ENCODE measurements at regions of chr2 and their contacts with region 1.

Region 1: GRCh38 chr2:73985308-73986084 is 786 bp downstream of the TET3 start:
- DNase-seq: peak; percentile 59
- H3K4me3 ChIP-seq: peak overlapping the region; percentile 52
- H3K27ac ChIP-seq: peak overlapping the region; percentile 76
- H3K4me1 ChIP-seq: peaks cover 35% of the 10 kb centered on the region
- H3K27me3 ChIP-seq: no peaks in the 10 kb centered on the region
- CTCF ChIP-seq: no peak

Region 2: DNA sequence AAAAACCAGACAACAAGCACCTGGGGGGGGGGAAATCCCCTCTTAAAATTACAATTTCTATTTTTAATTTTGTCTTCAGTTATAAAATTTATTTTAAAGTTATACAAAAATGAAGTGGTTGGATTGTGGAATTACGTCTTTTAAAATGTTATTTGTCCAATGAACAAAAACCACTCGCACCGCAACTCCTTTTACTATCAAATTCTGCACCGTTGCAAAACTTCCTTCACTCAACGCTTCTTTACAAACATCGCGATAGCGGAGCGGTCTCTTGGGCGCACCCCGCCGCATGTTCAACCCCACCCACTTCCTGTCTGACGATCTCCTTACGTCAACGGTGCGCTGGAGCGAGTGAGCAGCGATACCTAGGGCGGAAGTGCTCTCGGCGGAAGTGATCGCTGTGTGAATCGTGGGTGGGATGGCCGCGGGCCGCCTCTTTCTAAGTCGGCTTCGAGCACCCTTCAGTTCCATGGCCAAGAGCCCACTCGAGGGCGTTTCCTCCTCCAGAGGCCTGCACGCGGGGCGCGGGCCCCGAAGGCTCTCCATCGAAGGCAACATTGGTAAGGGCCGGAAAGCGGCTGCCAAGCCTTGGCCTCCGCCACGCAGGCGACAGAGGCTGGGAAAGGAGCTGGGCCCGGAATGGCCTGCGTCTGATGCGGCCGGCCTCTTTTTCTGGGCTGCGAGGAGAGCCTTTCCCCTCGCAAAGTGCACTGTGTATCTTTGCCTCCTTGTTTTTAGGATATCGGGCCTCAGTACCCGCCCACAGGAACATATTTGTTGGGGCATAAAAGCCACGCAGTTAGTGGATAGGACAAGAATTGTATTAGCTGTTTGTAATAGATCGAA is 58.8 kb before region 1 on chr2 and contains the start of gene DGUOK:
- intact Hi-C with region 1: loop called (anchors 5 kb)
- DNase-seq: peak; percentile 99
- H3K4me3 ChIP-seq: peak within 1 kb of the TSS; percentile 75
- H3K27ac ChIP-seq: peak within 1 kb of the TSS; percentile 96
- H3K4me1 ChIP-seq: peaks cover 12% of the 10 kb centered on the region
- H3K27me3 ChIP-seq: no peaks in the 10 kb centered on the region
- CTCF ChIP-seq: no peak
- total RNA-seq, gene DGUOK: 55.0 to 56.3 TPM

Region 3: GRCh38 chr2:74304332-74305148 is 319.0 kb after region 1 on chr2:
- intact Hi-C with region 1: no loop called
- DNase-seq: no peak
- H3K4me3 ChIP-seq: no peak overlapping the region
- H3K27ac ChIP-seq: no peak overlapping the region
- H3K4me1 ChIP-seq: no peaks in the 10 kb centered on the region
- H3K27me3 ChIP-seq: no peaks in the 10 kb centered on the region
- CTCF ChIP-seq: no peak

Region 4: GRCh38 chr2:74671479-74671878 is 686.0 kb after region 1 on chr2:
- intact Hi-C with region 1: no loop called
- DNase-seq: no peak
- H3K4me3 ChIP-seq: no peak overlapping the region
- H3K27ac ChIP-seq: no peak overlapping the region
- H3K4me1 ChIP-seq: no peaks in the 10 kb centered on the region
- H3K27me3 ChIP-seq: no peaks in the 10 kb centered on the region
- CTCF ChIP-seq: no peak